Activated CD4-positive, alpha-beta memory T cell treated with anti-CD3 and anti-CD28 coated beads, Interleukin-2, amount 10 ng/mL, durations not matched to agents 7 days and 5 days (primary cell): ENCODE measurements at regions of chr20 and their contacts with region 1.

Region 1: GRCh38 chr20:24948939-24949679 is at the start of gene CST7:
- DNase-seq: peak; percentile 93
- H3K4me3 Mint-ChIP-seq: peak within 1 kb of the TSS; percentile 89
- H3K27ac Mint-ChIP-seq: peak within 1 kb of the TSS; percentile 98
- H3K4me1 Mint-ChIP-seq: peaks cover 69% of the 10 kb centered on the region
- H3K27me3 Mint-ChIP-seq: no peaks in the 10 kb centered on the region
- total RNA-seq, gene CST7: 178 to 182 TPM

Region 2: GRCh38 chr20:24488064-24488799 is 460.9 kb before region 1 on chr20:
- CTCF ChIA-PET with region 1: no interaction called
- POLR2A ChIA-PET with region 1: no interaction called
- DNase-seq: no peak
- H3K4me3 Mint-ChIP-seq: no peak overlapping the region
- H3K27ac Mint-ChIP-seq: no peak overlapping the region
- H3K4me1 Mint-ChIP-seq: no peaks in the 10 kb centered on the region
- H3K27me3 Mint-ChIP-seq: no peaks in the 10 kb centered on the region

Region 3: GRCh38 chr20:24825591-24825990 is 123.5 kb before region 1 on chr20:
- CTCF ChIA-PET with region 1: no interaction called
- POLR2A ChIA-PET with region 1: no interaction called
- DNase-seq: no peak
- H3K4me3 Mint-ChIP-seq: no peak overlapping the region
- H3K27ac Mint-ChIP-seq: no peak overlapping the region
- H3K4me1 Mint-ChIP-seq: no peaks in the 10 kb centered on the region
- H3K27me3 Mint-ChIP-seq: no peaks in the 10 kb centered on the region

Region 4: DNA sequence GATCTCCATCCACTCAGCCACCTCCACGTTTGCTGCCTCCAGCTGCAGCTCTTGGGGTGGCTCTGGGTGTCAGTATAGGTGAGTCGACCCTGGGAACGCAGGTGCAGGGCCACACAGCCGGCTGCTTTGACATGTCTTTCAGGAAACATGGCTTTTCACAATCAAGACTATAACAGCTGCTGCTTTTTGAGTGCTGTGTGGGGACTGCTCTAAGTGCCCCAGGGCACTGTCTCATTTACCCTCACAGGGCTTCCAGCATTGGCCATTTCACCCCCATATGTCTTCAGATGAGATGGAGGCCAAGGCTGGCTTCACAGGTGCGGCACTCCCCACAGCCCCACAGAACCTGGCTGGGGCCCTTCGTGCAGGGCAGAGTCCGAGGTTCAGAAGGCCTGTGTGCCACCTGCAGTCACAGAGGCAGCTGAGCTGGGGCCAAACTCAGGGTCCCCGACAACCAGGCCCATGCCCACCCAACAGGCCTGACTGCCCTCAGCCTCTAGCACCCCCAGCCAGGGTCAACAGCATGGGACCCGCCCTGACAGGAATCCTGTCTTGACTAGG is 14.9 kb before region 1 on chr20:
- CTCF ChIA-PET with region 1: interaction called, 21 read pairs
- POLR2A ChIA-PET with region 1: interaction called, 39 read pairs
- DNase-seq: peak; percentile 14
- H3K4me3 Mint-ChIP-seq: no peak overlapping the region
- H3K27ac Mint-ChIP-seq: no peak overlapping the region
- H3K4me1 Mint-ChIP-seq: peaks cover 29% of the 10 kb centered on the region
- H3K27me3 Mint-ChIP-seq: no peaks in the 10 kb centered on the region

Region 5: DNA sequence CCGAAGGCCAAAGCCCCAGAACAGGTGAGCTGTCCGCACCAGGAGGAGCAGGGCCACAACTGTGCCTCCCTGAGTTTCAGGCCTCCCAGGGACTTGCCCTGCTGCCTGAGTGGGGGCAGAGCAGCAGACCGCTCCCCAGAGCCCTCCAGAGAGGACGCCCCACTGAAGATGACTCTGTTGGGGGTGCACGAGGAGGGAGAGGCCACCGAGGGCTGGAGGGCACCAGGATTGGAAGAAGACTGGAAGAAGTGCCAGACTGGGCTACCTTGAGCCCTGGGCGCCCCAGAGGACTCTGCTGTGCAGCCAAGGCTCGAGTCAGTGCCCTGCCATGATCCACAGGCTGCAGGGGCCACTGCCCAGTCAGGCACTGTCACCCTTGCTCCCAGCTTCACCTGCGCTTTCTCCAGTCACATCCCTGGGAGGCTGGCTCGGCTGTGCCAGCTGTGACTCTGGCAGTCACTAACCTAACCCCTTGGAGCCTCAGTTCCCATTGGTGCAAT is 11.2 kb after region 1 on chr20:
- CTCF ChIA-PET with region 1: interaction called, 3 read pairs
- POLR2A ChIA-PET with region 1: interaction called, 11 read pairs
- DNase-seq: peak; percentile 13
- H3K4me3 Mint-ChIP-seq: no peak overlapping the region
- H3K27ac Mint-ChIP-seq: peak overlapping the region; percentile 77
- H3K4me1 Mint-ChIP-seq: peaks cover 30% of the 10 kb centered on the region
- H3K27me3 Mint-ChIP-seq: no peaks in the 10 kb centered on the region

Region 6: DNA sequence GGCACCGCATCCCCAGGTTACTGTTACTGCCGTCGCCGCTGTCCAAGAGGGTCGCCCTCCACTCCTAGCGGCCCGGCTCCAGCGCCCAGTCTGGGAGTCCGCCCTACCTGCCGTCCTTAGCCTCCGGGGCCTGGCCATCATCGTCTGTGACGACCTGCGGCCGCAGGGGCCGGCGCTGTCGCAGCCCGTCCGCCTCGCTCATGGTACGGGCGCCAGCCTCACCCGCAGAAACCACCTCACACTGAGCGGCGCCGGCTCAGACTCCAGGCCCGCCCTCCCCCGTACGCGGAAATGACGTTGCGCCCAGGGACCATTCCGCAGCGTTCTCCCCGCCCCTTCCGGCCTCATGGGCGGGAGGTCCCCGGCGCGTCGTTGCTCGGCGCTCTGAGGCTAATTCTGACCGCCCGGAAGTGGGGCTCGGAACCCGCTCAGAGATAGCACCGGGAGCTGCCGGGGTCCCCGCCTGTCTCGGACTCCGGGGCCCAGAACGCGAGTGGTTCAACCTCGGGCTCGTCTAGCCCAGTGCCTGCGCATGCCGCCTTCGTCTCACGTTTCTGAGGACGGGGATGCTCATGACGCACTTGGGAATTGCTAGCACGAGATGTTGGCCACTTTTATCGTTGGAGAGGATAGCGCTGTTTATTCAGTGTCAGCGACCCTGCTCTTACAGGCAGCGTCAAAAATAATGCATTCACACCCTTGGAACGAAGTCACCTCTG is 43.5 kb after region 1 on chr20 and contains the start of gene APMAP:
- CTCF ChIA-PET with region 1: interaction called, 3 read pairs
- POLR2A ChIA-PET with region 1: interaction called, 12 read pairs
- DNase-seq: peak; percentile 96
- H3K4me3 Mint-ChIP-seq: peak within 1 kb of the TSS; percentile 90
- H3K27ac Mint-ChIP-seq: peak within 1 kb of the TSS; percentile 79
- H3K4me1 Mint-ChIP-seq: peaks cover 60% of the 10 kb centered on the region
- H3K27me3 Mint-ChIP-seq: peaks cover 8% of the 10 kb centered on the region
- total RNA-seq, gene APMAP: 44.1 to 46.5 TPM